MCF 10A (cell line): ENCODE measurements at regions of chr11 and their contacts with region 1.

Region 1: GRCh38 chr11:46345131-46345597 is 2.1 kb upstream of the DGKZ start:
- DNase-seq: peak; percentile 49
- H3K4me3 Mint-ChIP-seq: peak overlapping the region; percentile 47
- H3K27ac Mint-ChIP-seq: peak overlapping the region; percentile 9
- H3K4me1 Mint-ChIP-seq: peaks cover 32% of the 10 kb centered on the region
- H3K27me3 Mint-ChIP-seq: no peaks in the 10 kb centered on the region
- CTCF ChIP-seq: no peak

Region 2: DNA sequence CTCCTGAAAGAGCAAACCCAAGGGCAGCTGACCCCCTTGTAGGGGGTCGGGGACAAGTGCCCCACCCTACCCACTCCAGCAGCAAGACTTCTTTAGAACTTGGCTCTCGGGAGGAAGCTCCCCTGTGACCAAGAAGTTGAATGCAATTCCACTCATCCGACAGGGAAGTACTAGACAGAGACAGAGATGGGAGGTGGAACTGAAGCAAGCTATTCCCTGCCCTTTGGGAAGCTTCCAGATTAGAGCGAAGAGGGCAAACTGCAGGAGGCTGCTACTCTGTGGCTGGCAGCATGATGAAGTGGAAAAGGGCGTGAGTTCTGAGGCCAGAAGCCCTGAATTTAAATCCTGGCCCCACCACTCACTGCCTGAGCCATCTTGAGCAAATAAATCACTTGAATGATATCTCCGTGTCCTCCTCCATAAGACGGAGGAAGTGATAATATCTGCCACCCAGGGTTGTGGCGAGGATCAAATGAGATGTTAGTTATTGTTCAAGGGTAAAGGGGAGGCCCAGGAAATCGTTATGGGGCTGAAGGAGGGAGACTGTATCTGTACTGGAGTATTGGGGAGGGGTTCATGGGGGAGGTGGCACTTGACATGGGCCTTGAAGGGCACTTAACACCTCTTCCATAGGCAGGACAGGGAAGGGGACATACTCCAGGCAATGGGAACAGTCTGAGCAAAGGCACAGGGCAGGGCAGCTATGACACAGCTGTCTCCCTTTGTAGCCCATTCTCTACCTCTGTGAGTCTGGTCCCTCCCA is 14.1 kb before region 1 on chr11:
- CTCF ChIA-PET with region 1: interaction called, 10 read pairs
- POLR2A ChIA-PET with region 1: no interaction called
- intact Hi-C with region 1: no loop called
- DNase-seq: no peak
- H3K4me3 Mint-ChIP-seq: no peak overlapping the region
- H3K27ac Mint-ChIP-seq: no peak overlapping the region
- H3K4me1 Mint-ChIP-seq: peaks cover 18% of the 10 kb centered on the region
- H3K27me3 Mint-ChIP-seq: peaks cover 43% of the 10 kb centered on the region
- CTCF ChIP-seq: no peak

Region 3: DNA sequence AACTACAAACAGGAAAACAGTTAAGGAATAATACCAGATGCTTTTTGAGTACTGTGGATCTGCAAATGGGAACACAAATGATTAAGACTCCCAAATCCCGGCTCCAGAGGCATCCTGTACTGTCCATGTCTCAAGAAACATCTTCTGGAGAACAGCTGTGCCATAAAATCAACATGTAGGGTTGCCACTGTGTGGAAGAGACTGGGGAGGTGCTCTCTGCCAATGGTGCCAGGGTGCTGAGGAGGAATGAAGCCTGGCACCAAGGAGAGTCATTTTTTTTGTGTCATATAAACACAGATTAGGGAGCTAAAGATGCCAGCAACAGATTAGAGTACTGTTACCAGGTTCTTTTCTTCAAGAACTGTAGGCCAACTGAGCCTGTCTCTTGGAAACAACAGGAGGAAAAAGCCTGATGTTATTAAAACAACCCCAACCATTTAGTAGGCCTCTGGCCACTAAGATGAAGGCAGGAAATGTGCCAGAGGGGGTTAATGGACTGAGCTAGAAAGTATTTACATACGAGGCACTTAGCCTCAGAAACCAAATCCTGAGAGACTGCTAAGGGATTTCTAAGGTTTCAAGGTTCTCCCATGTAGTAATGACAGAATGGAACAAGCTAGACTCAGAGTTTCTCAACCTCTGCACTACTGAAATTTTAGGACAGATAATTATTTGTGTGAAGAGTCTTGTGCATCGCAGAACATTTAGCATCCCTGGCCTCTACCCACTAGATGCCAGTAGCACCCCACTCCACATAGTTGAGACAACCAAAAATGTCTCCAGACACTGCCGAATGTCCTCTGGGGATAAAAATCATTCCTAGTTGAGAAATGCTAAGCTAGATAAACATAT is 101.0 kb after region 1 on chr11:
- CTCF ChIA-PET with region 1: no interaction called
- POLR2A ChIA-PET with region 1: no interaction called
- intact Hi-C with region 1: no loop called
- DNase-seq: peak; percentile 5
- H3K4me3 Mint-ChIP-seq: no peak overlapping the region
- H3K27ac Mint-ChIP-seq: no peak overlapping the region
- H3K4me1 Mint-ChIP-seq: peaks cover 5% of the 10 kb centered on the region
- H3K27me3 Mint-ChIP-seq: no peaks in the 10 kb centered on the region
- CTCF ChIP-seq: no peak